Natural killer cell (primary cell): ENCODE measurements at regions of chr15 and their contacts with region 1.

Region 1: DNA sequence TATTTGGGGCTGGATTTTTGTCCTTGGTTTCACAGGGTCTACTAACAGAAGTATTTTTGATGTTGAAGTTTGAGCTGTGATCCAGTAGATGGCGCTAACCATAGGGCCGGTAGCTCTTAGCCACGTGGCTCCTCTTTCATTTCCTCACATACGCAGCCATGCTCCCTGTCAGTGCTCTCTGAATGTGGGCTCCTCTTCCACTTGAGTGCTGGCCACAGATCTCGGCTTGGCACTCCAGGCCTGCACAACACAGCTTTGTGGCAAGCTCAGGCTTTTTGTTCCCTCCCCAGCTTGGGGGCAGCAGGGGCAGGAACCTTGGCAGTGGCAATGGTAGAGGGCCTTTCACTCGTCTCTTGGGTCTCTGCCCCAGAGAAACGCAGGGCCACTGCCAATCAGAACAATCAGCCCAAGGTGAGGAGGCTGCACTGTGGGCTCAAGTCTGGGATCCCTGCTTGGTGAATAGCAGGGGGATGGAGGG is 18.6 kb upstream of the DNAAF4 start:
- DNase-seq: peak in 1 of 2 donors; percentile 58
- ATAC-seq: peak; percentile 73 to 81 (median 74)
- H3K4me3 ChIP-seq: no peak overlapping the region
- H3K4me3 Mint-ChIP-seq: no peak overlapping the region
- H3K27ac ChIP-seq: no peak overlapping the region
- H3K27ac Mint-ChIP-seq: no peak overlapping the region
- H3K4me1 ChIP-seq: peaks cover 4% of the 10 kb centered on the region
- H3K4me1 Mint-ChIP-seq: no peaks in the 10 kb centered on the region
- H3K27me3 ChIP-seq: no peaks in the 10 kb centered on the region
- H3K27me3 Mint-ChIP-seq: peaks cover 16 to 34% of the 10 kb centered on the region in 2 donors
- CTCF ChIP-seq: peak; percentile 47

Region 2: DNA sequence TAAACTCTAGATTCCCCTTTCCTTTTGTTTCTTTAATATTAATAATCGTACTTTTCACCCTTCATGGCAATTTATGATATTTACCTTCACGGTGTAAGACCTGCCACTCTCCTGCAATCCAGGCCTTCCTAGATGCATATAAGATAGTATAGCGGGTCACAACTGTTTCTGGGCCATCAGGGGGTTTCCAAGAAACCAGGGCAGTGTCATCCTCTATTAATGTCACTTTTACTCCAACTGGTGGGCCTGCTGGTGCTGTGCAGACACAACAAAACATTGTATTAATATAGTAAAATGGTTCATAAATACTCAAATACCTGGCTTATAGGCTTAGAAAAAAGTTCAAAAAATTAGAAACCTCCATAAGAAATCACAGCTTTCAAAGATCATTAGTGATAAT is 110.5 kb after region 1 on chr15:
- intact Hi-C with region 1: loop called (anchors 2 kb)
- DNase-seq: no peak
- ATAC-seq: no peak
- H3K4me3 ChIP-seq: no peak overlapping the region
- H3K4me3 Mint-ChIP-seq: no peak overlapping the region
- H3K27ac ChIP-seq: no peak overlapping the region
- H3K27ac Mint-ChIP-seq: no peak overlapping the region
- H3K4me1 ChIP-seq: no peaks in the 10 kb centered on the region
- H3K4me1 Mint-ChIP-seq: no peaks in the 10 kb centered on the region
- H3K27me3 ChIP-seq: no peaks in the 10 kb centered on the region
- H3K27me3 Mint-ChIP-seq: peaks cover 7% of the 10 kb centered on the region in 2 donors
- CTCF ChIP-seq: no peak

Region 3: DNA sequence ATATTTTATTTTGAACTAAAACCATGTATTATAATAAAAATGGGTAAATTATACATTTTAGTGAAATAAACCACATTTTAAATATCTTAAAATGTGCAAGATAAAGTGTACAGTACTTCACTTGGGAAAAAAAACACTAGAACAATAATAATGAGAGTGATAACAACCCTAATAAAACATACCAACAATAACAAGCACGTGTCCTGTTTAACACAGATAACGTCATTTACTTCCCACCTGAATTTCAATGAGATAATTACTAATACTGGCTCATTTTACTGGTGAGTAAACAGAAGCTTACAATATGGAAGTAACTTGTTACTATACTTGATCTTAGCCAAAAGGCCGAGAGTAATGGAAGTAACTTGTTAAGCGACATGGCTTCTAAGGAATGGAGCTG is 326.5 kb after region 1 on chr15:
- intact Hi-C with region 1: no loop called
- DNase-seq: no peak
- ATAC-seq: no peak
- H3K4me3 ChIP-seq: no peak overlapping the region
- H3K4me3 Mint-ChIP-seq: no peak overlapping the region
- H3K27ac ChIP-seq: no peak overlapping the region
- H3K27ac Mint-ChIP-seq: no peak overlapping the region
- H3K4me1 ChIP-seq: no peaks in the 10 kb centered on the region
- H3K4me1 Mint-ChIP-seq: no peaks in the 10 kb centered on the region
- H3K27me3 ChIP-seq: no peaks in the 10 kb centered on the region
- H3K27me3 Mint-ChIP-seq: no peaks in the 10 kb centered on the region
- CTCF ChIP-seq: no peak

Region 4: DNA sequence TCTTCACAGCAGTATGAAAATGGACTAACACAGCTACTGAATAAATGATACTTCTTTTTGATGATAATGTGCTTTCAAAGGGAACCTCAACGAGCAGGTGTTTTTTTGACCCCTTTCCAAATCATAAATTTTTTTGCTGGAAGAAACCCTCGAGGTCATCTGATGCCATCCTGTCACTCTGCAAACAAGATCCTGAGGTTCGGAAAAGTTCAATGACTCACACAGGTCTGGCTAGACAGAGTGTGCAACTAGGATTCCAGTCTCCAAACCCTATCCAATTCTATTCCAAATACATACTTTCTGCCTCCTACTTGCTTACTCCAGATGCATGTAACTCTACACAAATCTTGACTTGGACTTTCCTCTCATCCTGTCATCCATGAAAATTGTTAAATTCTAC is 342.1 kb after region 1 on chr15:
- intact Hi-C with region 1: no loop called
- DNase-seq: no peak
- ATAC-seq: no peak
- H3K4me3 ChIP-seq: no peak overlapping the region
- H3K4me3 Mint-ChIP-seq: no peak overlapping the region
- H3K27ac ChIP-seq: no peak overlapping the region
- H3K27ac Mint-ChIP-seq: no peak overlapping the region
- H3K4me1 ChIP-seq: no peaks in the 10 kb centered on the region
- H3K4me1 Mint-ChIP-seq: no peaks in the 10 kb centered on the region
- H3K27me3 ChIP-seq: no peaks in the 10 kb centered on the region
- H3K27me3 Mint-ChIP-seq: no peaks in the 10 kb centered on the region
- CTCF ChIP-seq: no peak